Heart right ventricle (tissue), 16 donors: ENCODE measurements at regions of chr14 and their contacts with region 1.

Region 1: DNA sequence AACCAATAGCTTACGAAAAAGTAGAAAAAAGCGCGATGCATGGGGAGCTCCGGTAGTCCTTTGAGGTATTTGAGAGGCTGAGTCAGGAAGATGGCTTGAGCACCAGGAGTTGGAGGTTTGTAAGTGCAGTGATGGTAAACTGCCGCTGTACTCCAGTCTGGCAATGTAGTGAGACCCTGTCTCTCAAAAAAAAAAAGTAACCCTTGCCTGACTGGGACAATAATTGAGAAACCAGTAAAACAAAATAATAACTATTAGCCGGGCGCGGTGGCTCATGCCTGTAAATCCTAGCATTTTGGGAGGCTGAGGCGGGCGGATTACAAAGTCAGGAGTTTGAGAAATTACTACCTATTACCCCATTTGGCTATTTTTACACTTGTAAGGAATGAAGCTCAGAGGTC is 632 bp upstream of the ACOT2 start:
- DNase-seq: no peak
- ATAC-seq: no peak
- H3K4me3 ChIP-seq: peak overlapping the region; percentile 21 to 89 (median 76)
- H3K27ac ChIP-seq: peak overlapping the region; percentile 77 to 98 (median 94)
- H3K4me1 ChIP-seq: peaks cover 3 to 44% (median 31%) of the 10 kb centered on the region in 9 donors
- H3K27me3 ChIP-seq: no peaks in the 10 kb centered on the region
- CTCF ChIP-seq: no peak

Region 2: GRCh38 chr14:73526569-73526968 is 41.8 kb before region 1 on chr14:
- intact Hi-C with region 1: loop called in 2 of 10 experiments (anchors 5 kb)
- DNase-seq: peak; percentile 51 to 74
- ATAC-seq: peak; percentile 82 to 96 (median 93)
- H3K4me3 ChIP-seq: no peak overlapping the region
- H3K27ac ChIP-seq: peak overlapping the region in 8 of 10 donors; percentile 46 to 78 (median 54)
- H3K4me1 ChIP-seq: peaks cover 0 to 14% (median 0%) of the 10 kb centered on the region in 9 donors
- H3K27me3 ChIP-seq: no peaks in the 10 kb centered on the region
- CTCF ChIP-seq: peak in 1 of 9 donors; percentile 13